ENCODE measurements at regions of chr3 and their contacts with region 1.

Region 1: GRCh38 chr3:196739671-196740480 is at the start of gene PAK2:
- DNase-seq: peak; percentile 94
- H3K4me3 ChIP-seq: peak within 1 kb of the TSS; percentile 74 to 90 (median 88)
- H3K27ac ChIP-seq: peak within 1 kb of the TSS; percentile 96 to 99 (median 96)
- H3K4me1 ChIP-seq: peaks cover 0 to 35% (median 23%) of the 10 kb centered on the region in 4 donors
- H3K27me3 ChIP-seq: no peaks in the 10 kb centered on the region
- CTCF ChIP-seq: no peak
- EP300 ChIP-seq: no peak
- POLR2A ChIP-seq: peak in 1 of 2 donors; percentile 45
- total RNA-seq, gene PAK2: 35.5 to 44.6 (median 37.7) TPM

Region 2: DNA sequence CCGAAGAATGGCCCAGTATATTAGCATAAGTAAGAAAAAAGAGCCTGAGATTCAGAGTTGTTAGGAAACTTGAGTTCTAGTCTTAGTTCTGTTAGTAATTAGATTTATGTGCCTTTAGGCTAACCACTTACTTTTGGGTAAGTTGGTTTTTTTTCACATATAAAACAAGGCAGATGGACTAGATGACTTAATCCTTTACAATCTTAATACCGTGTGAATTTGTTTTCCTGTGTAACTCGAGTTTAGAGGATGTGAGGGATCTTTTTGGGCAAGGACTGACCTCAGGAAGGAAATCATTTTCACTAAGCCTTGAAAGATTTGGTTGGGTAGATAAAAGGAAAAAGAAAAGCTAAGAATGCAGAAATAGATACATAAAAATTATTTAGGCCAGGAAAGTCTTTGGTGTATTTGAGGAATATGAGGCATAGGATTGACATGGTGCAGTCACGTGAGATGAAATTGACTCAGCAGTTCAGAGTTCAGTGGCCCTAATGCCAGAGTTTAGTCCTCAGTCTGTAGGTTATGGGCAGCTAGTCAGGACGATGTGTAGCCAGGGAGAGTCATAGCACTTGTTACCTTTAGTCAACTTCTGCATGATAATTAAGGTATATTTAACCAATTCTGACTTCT is 34.4 kb after region 1 on chr3:
- intact Hi-C with region 1: no loop called
- DNase-seq: no peak
- H3K4me3 ChIP-seq: no peak overlapping the region
- H3K27ac ChIP-seq: peak overlapping the region in 1 of 4 donors; percentile 10
- H3K4me1 ChIP-seq: peaks cover 0 to 59% (median 46%) of the 10 kb centered on the region in 4 donors
- H3K27me3 ChIP-seq: no peaks in the 10 kb centered on the region
- CTCF ChIP-seq: no peak
- EP300 ChIP-seq: no peak
- POLR2A ChIP-seq: no peak

Region 3: GRCh38 chr3:196803891-196804468 is 64.1 kb after region 1 on chr3:
- intact Hi-C with region 1: no loop called
- DNase-seq: no peak
- H3K4me3 ChIP-seq: no peak overlapping the region
- H3K27ac ChIP-seq: no peak overlapping the region
- H3K4me1 ChIP-seq: no peaks in the 10 kb centered on the region
- H3K27me3 ChIP-seq: no peaks in the 10 kb centered on the region
- CTCF ChIP-seq: no peak
- EP300 ChIP-seq: no peak
- POLR2A ChIP-seq: no peak

Region 4: DNA sequence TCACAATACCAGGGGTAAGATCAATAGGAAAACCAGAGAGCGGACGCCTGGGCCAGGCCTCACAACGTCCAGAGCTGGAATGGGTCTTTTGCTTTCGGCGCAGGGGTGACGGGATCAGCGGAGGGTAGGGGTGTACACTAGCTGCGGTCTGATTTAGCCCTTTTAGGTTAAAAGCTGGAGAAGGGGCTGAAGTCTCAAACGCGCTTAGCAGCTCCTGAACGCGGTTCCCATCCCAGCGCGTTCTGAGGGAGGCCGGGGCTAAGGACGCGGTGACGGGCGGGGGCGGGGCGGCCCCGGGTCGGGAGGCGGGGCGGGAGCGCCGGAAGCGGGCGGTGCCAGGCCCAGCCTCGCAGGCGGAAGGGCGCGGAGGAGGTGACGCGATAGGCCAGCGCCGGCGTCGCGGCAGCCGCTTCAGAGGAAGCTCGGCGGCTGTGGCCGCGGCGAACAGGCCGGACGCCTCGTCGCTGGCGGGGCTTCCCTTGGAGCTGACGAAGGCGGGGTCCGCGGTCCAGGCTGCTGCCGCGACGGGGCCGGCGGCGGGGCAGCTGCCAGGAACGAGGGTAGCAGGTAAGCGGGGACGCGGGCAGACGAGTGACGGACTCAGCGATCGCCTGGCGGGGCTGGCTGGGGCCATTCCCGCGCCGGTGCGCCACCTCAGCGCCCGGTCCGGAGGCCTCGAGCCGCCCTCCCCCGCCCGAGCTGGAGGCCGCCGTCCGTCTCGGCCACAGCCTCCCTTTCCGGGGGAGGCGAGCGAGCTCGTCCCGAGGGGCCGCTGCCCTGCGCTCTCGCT is 127.8 kb after region 1 on chr3 and contains the start of gene SENP5:
- intact Hi-C with region 1: loop called (anchors 1 kb)
- DNase-seq: peak; percentile 94
- H3K4me3 ChIP-seq: peak within 1 kb of the TSS; percentile 83 to 100 (median 98)
- H3K27ac ChIP-seq: peak within 1 kb of the TSS; percentile 94 to 100 (median 96)
- H3K4me1 ChIP-seq: peaks cover 0 to 47% (median 28%) of the 10 kb centered on the region in 4 donors
- H3K27me3 ChIP-seq: no peaks in the 10 kb centered on the region
- CTCF ChIP-seq: no peak
- EP300 ChIP-seq: no peak
- POLR2A ChIP-seq: peak; percentile 73 to 79
- total RNA-seq, gene SENP5: 41.5 to 54.6 (median 45.8) TPM

Measured in sigmoid colon (tissue), 7 donors.